Heart right ventricle (tissue), 16 donors: ENCODE measurements at regions of chr21 and their contacts with region 1.

Region 1: DNA sequence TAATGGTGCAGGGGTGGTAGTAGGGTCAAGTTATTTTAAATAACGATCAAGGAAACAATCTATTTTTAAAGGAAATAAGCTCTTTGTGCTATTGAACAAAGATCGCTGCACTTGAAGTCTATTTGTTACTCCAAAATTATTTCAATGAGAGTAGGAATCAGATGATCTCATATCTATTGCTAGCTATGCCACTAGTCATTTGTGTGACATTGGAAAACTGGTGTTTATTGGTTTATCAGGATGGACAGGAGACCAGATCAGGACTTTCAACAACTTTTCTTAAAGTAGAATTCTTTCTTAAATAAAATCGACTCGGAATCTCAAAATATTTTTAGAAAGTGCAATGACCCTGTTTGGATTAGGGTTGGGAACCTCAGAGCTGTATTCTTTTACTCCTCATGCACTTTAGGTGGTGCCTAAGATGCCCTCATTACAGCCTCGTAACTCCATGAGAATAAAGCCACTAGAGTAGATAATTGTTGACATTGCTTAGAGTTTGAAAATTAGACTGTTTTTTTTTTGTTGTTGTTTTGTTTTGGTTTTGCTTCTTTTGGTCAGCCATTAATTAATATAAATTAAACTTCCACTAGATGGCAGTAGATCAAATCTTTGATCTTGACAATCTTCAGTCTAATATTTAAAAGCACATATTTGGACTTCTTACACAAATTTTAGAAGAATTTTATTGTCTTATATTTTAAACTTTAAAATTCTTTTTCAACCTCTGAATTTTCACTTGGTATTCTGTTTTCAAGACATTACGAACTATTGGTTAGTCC is 352.4 kb downstream of the USP25 start:
- DNase-seq: no peak
- ATAC-seq: peak in 2 of 8 donors; percentile 33 to 38
- H3K4me3 ChIP-seq: peak overlapping the region in 5 of 10 donors; percentile 17 to 35 (median 33)
- H3K27ac ChIP-seq: peak overlapping the region in 1 of 10 donors; percentile 23
- H3K4me1 ChIP-seq: peaks cover 0 to 14% (median 4%) of the 10 kb centered on the region in 9 donors
- H3K27me3 ChIP-seq: no peaks in the 10 kb centered on the region
- CTCF ChIP-seq: peak; percentile 28 to 73 (median 54)

Region 2: DNA sequence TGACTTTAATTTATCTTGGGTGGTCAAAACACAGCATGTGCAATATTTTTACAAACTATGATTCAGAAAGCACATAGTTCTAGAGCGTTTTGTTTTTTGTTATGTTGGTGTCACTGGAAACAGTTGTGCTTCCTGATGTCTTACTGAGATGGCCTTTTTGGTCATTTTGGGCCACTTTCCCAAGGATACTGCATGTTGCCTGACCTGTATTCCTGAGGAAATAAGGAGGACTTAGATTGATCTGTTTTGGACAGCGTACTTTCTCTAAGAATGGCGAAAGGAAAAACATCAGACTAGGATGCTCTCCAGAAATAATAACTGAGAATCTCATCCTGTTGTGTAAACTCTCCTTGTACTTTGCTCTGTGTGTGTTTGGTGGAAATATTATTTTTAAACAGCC is 98.8 kb after region 1 on chr21:
- intact Hi-C with region 1: loop called in 1 of 10 experiments (anchors 5 kb)
- DNase-seq: no peak
- ATAC-seq: peak in 3 of 8 donors; percentile 25 to 74 (median 25)
- H3K4me3 ChIP-seq: no peak overlapping the region
- H3K27ac ChIP-seq: no peak overlapping the region
- H3K4me1 ChIP-seq: peaks cover 0 to 23% (median 10%) of the 10 kb centered on the region in 9 donors
- H3K27me3 ChIP-seq: no peaks in the 10 kb centered on the region
- CTCF ChIP-seq: no peak

Region 3: DNA sequence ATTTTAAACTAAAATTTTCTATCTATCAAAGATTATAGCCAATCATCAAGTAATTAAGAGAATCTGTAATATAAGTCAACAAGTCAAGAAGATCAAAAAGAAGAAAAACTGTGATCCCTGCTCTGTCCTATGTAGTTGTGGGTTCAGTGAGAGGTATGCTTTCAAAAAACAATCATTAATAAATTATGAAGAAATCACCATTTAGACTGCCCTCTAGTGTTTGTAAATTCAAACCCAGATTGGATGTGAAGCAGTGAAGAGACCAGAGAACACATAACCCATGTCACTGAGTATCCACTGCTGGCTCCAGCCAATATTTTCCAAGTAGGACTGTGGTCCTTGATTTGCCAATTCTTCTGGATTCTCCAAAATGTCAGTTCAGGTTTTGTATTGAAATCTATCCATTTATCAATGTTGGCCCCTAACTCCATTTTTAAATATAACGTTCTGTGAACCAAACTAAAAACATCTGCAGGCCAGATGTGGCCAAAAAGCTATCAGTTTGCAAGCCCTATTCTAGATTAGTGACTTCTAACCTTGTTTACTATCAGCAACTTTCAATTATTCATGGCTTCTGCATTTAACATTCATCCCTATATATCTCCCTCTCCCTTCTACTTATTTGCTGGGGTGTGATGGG is 963.1 kb after region 1 on chr21:
- intact Hi-C with region 1: loop called in 1 of 10 experiments (anchors 10 kb)
- DNase-seq: no peak
- ATAC-seq: peak in 2 of 8 donors; percentile 41 to 52
- H3K4me3 ChIP-seq: no peak overlapping the region
- H3K27ac ChIP-seq: no peak overlapping the region
- H3K4me1 ChIP-seq: no peaks in the 10 kb centered on the region
- H3K27me3 ChIP-seq: no peaks in the 10 kb centered on the region
- CTCF ChIP-seq: peak in 7 of 9 donors; percentile 38 to 69 (median 51)